T-cell (primary cell): ENCODE measurements at regions of chr2 and their contacts with region 1.

Region 1: DNA sequence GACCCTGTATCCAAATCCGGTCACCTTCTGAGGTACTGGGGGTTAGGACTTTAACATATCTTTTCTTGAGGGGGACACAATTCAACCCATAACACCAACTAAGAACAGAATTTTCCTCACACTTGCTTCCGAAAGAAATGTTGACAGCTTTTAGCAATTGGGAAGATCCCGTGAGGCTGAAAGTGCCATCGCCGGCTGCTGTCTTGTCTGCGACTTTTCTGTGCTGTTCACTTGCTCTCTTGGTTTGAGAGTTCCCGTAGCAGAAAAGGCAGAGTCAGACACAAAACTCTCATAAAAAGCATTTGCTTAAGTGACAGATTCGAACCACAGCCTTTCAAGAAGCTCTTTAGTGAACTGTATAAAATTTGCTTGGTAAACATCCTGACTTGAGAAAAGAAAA is 253.4 kb downstream of the ARHGAP15 start:
- DNase-seq: no peak
- ATAC-seq: no peak
- H3K4me3 ChIP-seq: no peak overlapping the region
- H3K4me3 Mint-ChIP-seq: no peak overlapping the region
- H3K27ac ChIP-seq: no peak overlapping the region
- H3K27ac Mint-ChIP-seq: no peak overlapping the region
- H3K4me1 ChIP-seq: no peaks in the 10 kb centered on the region
- H3K4me1 Mint-ChIP-seq: peaks cover 52 to 63% (median 53%) of the 10 kb centered on the region in 3 donors
- H3K27me3 ChIP-seq: no peaks in the 10 kb centered on the region
- H3K27me3 Mint-ChIP-seq: no peaks in the 10 kb centered on the region

Region 2: DNA sequence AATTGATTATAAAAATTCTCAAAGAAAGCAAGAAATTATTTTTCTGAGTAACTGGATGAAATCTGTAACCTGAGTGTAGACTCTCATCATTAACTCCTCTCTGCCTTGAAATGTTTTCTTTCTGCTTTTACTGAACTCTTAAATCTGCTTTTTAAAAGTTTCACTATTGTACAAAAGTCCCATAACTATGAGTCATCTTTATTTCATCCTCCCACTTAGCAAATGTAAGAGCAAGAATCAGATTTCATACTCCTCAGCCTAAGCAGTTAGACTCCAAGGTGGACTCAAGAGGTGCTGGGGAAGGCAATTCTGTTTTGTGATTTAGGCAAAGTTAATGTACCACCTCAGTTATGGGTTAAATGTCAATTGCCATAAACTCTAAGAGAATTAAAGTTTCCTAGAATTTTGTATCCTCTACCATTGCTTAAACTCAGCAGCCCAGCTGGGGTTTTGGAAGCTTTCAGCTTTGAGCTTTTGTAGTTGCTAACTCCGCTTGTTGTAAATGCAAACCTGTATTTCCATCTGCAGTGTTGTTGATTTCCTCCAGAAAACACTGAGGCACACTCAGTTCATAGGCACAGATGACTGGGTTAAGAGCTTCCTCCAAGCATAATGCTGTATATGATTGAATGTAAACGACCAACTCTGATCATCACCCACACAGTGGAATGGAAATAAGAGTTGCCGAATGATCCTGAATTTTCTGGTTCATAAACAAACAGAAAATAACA is 15.5 kb after region 1 on chr2:
- CTCF ChIA-PET with region 1: no interaction called
- POLR2A ChIA-PET with region 1: no interaction called
- DNase-seq: no peak
- ATAC-seq: peak in 2 of 4 experiments; percentile 33 to 53
- H3K4me3 ChIP-seq: no peak overlapping the region
- H3K4me3 Mint-ChIP-seq: no peak overlapping the region
- H3K27ac ChIP-seq: no peak overlapping the region
- H3K27ac Mint-ChIP-seq: peak overlapping the region in 1 of 2 donors; percentile 42
- H3K4me1 ChIP-seq: peaks cover 0 to 4% of the 10 kb centered on the region in 2 experiments
- H3K4me1 Mint-ChIP-seq: peaks cover 46 to 68% (median 63%) of the 10 kb centered on the region in 3 donors
- H3K27me3 ChIP-seq: no peaks in the 10 kb centered on the region
- H3K27me3 Mint-ChIP-seq: no peaks in the 10 kb centered on the region

Region 3: DNA sequence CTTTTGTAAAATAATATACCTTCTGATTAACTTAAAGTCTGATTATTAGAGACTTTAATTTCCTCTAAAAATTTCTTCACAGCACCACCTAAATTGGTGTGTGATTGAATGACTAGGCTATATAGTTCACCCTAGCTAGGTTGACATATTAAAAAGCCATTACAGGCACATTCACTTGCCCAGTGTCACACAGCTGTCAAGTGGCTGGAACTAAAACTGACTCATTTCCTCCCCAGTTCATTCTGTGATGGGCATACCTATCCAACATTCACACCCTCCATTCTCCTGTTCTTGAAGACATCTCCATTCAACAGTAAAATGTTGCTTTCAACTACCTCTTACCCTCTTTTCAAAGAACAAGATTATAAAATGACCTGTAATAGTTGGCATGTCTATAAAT is 81.1 kb after region 1 on chr2:
- CTCF ChIA-PET with region 1: no interaction called
- POLR2A ChIA-PET with region 1: no interaction called
- DNase-seq: no peak
- ATAC-seq: no peak
- H3K4me3 ChIP-seq: no peak overlapping the region
- H3K4me3 Mint-ChIP-seq: no peak overlapping the region
- H3K27ac ChIP-seq: no peak overlapping the region
- H3K27ac Mint-ChIP-seq: no peak overlapping the region
- H3K4me1 ChIP-seq: no peaks in the 10 kb centered on the region
- H3K4me1 Mint-ChIP-seq: peaks cover 17 to 37% (median 32%) of the 10 kb centered on the region in 3 donors
- H3K27me3 ChIP-seq: no peaks in the 10 kb centered on the region
- H3K27me3 Mint-ChIP-seq: no peaks in the 10 kb centered on the region

Region 4: GRCh38 chr2:143779021-143779420 is 396.4 kb after region 1 on chr2:
- CTCF ChIA-PET with region 1: interaction called in 1 of 2 experiments, 10 read pairs
- POLR2A ChIA-PET with region 1: no interaction called
- DNase-seq: no peak
- ATAC-seq: no peak
- H3K4me3 ChIP-seq: no peak overlapping the region
- H3K4me3 Mint-ChIP-seq: no peak overlapping the region
- H3K27ac ChIP-seq: no peak overlapping the region
- H3K27ac Mint-ChIP-seq: no peak overlapping the region
- H3K4me1 ChIP-seq: no peaks in the 10 kb centered on the region
- H3K4me1 Mint-ChIP-seq: no peaks in the 10 kb centered on the region
- H3K27me3 ChIP-seq: no peaks in the 10 kb centered on the region
- H3K27me3 Mint-ChIP-seq: no peaks in the 10 kb centered on the region